Activated B cell treated with CpG ODN at 0.5 μM for 24 hours (primary cell): ENCODE measurements at regions of chr20 and their contacts with region 1.

Region 1: GRCh38 chr20:15923030-15923776 is 650.0 kb downstream of the KIF16B start:
- DNase-seq: peak; percentile 24
- ATAC-seq: peak; percentile 74
- H3K4me3 Mint-ChIP-seq: peak overlapping the region; percentile 78
- H3K27ac Mint-ChIP-seq: peak overlapping the region; percentile 96
- H3K4me1 Mint-ChIP-seq: peaks cover 74% of the 10 kb centered on the region
- H3K27me3 Mint-ChIP-seq: no peaks in the 10 kb centered on the region
- CTCF ChIP-seq: no peak

Region 2: DNA sequence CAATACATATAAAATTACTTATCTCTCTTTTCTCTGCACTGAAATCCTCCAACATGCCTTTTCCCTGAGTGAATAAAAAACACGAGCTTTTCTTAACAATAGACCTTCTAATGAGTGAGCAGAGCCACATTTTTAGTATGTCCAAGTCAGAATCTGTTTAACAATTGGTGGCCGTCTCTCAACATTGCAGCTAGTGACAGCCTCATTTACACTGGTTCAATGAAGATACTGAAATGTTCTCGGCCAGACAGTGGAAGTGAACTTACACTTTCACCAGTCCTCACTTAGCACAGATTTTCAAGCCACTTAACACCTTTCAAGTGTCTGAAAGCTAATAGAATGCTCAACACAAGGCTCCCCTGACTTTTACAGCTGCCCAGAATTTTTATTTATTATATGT is 117.1 kb before region 1 on chr20:
- CTCF ChIA-PET with region 1: no interaction called
- POLR2A ChIA-PET with region 1: no interaction called
- intact Hi-C with region 1: loop called (anchors 1 kb)
- DNase-seq: no peak
- ATAC-seq: no peak
- H3K4me3 Mint-ChIP-seq: peak overlapping the region; percentile 17
- H3K27ac Mint-ChIP-seq: peak overlapping the region; percentile 30
- H3K4me1 Mint-ChIP-seq: peaks cover 41% of the 10 kb centered on the region
- H3K27me3 Mint-ChIP-seq: no peaks in the 10 kb centered on the region
- CTCF ChIP-seq: no peak

Region 3: DNA sequence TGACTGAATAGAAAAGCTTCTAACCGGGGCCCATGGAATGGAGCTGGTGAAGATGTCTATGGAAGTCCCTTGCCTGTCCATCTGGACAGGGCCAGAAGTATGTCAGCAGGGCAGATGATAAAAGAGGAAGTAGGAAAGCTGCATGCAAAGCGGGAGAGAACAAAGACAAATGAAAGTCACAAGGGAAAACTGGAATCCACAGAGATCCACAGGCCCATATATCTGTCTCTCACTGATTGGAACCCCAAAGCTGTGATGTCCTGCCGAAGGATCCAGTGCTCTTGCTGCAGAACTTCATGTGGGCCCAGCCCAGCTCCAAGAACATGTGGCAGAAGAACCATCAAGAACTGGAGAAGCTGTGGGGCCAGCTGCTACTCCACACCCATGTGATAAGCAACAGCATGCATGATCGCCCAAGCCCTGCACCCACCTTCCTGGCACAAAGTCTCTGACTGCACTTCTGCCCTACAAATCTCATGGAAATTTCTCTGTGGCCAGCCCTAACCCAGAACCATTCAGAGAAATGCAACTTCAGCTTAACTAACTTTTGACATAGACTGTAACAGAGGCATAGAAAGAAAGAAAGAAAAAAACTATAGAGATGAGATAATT is 65.9 kb before region 1 on chr20:
- CTCF ChIA-PET with region 1: no interaction called
- POLR2A ChIA-PET with region 1: interaction called, 3 read pairs
- intact Hi-C with region 1: loop called (anchors 2 kb)
- DNase-seq: peak; percentile 28
- ATAC-seq: peak; percentile 74
- H3K4me3 Mint-ChIP-seq: peak overlapping the region; percentile 64
- H3K27ac Mint-ChIP-seq: peak overlapping the region; percentile 76
- H3K4me1 Mint-ChIP-seq: peaks cover 67% of the 10 kb centered on the region
- H3K27me3 Mint-ChIP-seq: no peaks in the 10 kb centered on the region
- CTCF ChIP-seq: no peak

Region 4: DNA sequence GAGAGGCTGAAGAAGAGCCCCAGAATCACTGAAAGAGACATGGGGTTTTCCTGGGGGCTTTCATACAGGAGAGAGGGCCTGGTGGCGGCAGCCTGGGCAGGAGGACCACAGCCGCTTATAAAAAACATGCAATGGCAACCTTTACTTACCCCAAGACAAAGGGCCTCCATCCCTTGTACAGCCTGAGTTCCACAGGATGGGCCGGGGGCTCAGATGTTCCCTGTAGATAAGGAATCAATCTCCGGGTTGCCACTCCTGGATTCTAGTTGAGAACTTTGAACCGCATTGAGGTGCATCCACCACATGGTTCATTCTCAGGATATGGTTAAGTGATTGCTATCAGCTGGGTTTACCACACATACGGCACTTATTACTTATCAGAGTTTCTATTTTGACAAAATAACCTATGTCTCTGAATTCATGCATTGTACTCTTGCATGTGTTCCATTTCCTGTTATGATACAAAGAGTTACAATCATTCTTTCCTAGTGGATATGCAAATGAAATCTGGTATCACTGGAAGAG is 27.6 kb before region 1 on chr20:
- CTCF ChIA-PET with region 1: interaction called, 3 read pairs
- POLR2A ChIA-PET with region 1: interaction called, 12 read pairs
- intact Hi-C with region 1: loop called (anchors 2 kb)
- DNase-seq: peak; percentile 22
- ATAC-seq: peak; percentile 82
- H3K4me3 Mint-ChIP-seq: peak overlapping the region; percentile 42
- H3K27ac Mint-ChIP-seq: peak overlapping the region; percentile 83
- H3K4me1 Mint-ChIP-seq: peaks cover 46% of the 10 kb centered on the region
- H3K27me3 Mint-ChIP-seq: no peaks in the 10 kb centered on the region
- CTCF ChIP-seq: no peak

Region 5: GRCh38 chr20:16040742-16041141 is 117.5 kb after region 1 on chr20:
- CTCF ChIA-PET with region 1: no interaction called
- POLR2A ChIA-PET with region 1: no interaction called
- intact Hi-C with region 1: loop called (anchors 5 kb)
- DNase-seq: no peak
- ATAC-seq: peak; percentile 80
- H3K4me3 Mint-ChIP-seq: peak overlapping the region; percentile 60
- H3K27ac Mint-ChIP-seq: peak overlapping the region; percentile 79
- H3K4me1 Mint-ChIP-seq: peaks cover 81% of the 10 kb centered on the region
- H3K27me3 Mint-ChIP-seq: no peaks in the 10 kb centered on the region
- CTCF ChIP-seq: no peak

Region 6: DNA sequence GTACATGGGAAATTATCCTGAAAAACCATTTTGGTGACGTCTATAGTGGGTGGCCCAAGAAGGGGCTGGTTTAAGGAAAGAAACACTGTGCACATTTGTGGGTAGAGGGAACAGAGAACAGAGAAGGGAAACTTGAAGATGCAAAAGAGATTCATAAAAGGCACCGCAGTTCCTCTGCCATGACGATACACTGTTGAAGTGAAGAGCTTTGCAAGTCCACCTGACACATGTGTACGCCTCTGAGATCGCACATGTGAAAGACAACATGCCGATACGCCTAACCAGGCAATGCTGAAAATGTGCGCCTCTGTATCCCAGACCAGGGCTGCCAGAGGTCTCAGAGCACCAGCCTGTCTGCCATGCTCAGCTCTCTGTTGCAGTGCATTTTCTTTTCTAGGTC is 469.1 kb after region 1 on chr20:
- CTCF ChIA-PET with region 1: no interaction called
- POLR2A ChIA-PET with region 1: no interaction called
- intact Hi-C with region 1: loop called (anchors 5 kb)
- DNase-seq: peak; percentile 26
- ATAC-seq: peak; percentile 85
- H3K4me3 Mint-ChIP-seq: peak overlapping the region; percentile 72
- H3K27ac Mint-ChIP-seq: peak overlapping the region; percentile 46
- H3K4me1 Mint-ChIP-seq: peaks cover 40% of the 10 kb centered on the region
- H3K27me3 Mint-ChIP-seq: no peaks in the 10 kb centered on the region
- CTCF ChIP-seq: no peak